ENCODE measurements at regions of chr5 and their contacts with region 1.

Region 1: DNA sequence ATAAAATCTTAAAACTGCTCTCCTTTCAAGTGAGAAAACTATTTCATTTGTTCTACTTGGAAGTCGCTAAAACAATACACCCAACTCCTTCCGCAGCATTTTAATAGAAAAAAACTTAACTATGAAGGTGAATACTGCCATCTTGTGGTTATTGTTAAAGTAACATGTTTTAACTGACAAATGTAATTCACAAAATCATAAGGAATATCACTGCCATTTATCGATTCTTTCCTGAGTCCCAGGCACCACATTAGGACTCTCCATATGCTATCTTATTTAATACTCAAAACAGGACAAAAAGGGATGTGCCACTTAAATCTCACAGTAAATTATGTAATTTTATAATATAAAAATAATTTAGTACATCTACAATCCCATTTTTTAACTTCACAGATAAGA is 130.5 kb upstream of the ITGA1 start:
- DNase-seq: no peak
- H3K4me3 ChIP-seq: no peak overlapping the region
- H3K27ac ChIP-seq: no peak overlapping the region
- H3K27me3 ChIP-seq: no peaks in the 10 kb centered on the region
- CTCF ChIP-seq: peak; percentile 24

Region 2: GRCh38 chr5:50962934-50963872 is 1694.0 kb before region 1 on chr5:
- in situ Hi-C with region 1: loop called (anchors 25 kb)
- DNase-seq: peak; percentile 47
- H3K4me3 ChIP-seq: peak overlapping the region; percentile 47
- H3K27ac ChIP-seq: no peak overlapping the region
- H3K27me3 ChIP-seq: peaks cover 46% of the 10 kb centered on the region
- CTCF ChIP-seq: peak; percentile 99

Measured in brain microvascular endothelial cell (primary cell).